ENCODE measurements at regions of chr1 and their contacts with region 1.

Region 1: DNA sequence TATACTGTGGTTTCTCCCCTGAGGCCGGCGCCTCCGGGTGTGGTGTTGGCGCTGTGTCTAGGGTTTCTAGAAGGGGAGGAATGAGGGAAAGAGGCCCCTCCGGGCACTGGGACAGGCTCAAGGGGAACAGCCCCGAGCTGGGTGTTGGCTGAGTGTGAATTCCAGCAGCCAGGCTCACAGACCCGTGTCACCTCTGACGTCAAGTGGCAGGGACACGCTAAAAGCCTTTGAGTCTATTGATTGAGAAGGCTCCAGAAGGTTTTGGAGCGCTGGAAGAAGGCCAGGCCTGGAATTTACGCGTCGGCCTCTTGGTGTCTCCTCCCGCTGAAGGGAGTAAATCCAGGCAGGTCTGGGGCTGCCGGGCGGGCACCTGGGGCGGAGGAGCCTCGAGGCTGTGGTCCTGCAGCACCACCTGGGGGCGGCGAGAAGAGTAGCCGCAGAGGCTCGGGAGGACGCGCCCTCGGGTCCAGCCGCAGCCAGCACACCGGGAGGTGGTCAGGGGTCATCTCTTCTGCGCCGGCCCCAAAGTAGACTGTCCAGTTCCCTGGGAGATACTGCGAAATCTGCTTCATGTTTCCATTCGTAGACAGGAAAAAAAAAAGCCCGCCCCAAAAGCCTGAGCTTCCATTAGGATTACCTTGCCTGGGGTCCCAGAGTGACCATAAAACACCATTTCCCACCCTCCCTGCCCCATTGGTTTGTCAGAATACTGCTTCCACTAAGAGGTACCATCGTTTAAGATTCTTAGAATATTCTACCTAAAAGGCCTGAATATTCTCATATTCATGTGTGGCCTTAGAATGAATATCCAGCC is 61.7 kb downstream of the TLR5 start:
- DNase-seq: peak; percentile 73
- H3K4me3 ChIP-seq: no peak overlapping the region
- H3K27ac ChIP-seq: no peak overlapping the region
- H3K4me1 ChIP-seq: no peaks in the 10 kb centered on the region
- CTCF ChIP-seq: peak; percentile 77

Region 2: GRCh38 chr1:222465211-222466041 is 616.0 kb before region 1 on chr1:
- CTCF ChIA-PET with region 1: no interaction called
- POLR2A ChIA-PET with region 1: no interaction called
- intact Hi-C with region 1: loop called (anchors 1 kb)
- DNase-seq: peak; percentile 81
- H3K4me3 ChIP-seq: peak overlapping the region; percentile 33
- H3K27ac ChIP-seq: no peak overlapping the region
- H3K4me1 ChIP-seq: peaks cover 5% of the 10 kb centered on the region
- CTCF ChIP-seq: peak; percentile 95

Region 3: GRCh38 chr1:222654849-222655248 is 426.5 kb before region 1 on chr1:
- CTCF ChIA-PET with region 1: no interaction called
- POLR2A ChIA-PET with region 1: no interaction called
- intact Hi-C with region 1: loop called (anchors 10 kb)
- DNase-seq: peak; percentile 8
- H3K4me3 ChIP-seq: no peak overlapping the region
- H3K27ac ChIP-seq: no peak overlapping the region
- H3K4me1 ChIP-seq: no peaks in the 10 kb centered on the region
- CTCF ChIP-seq: 0 out of 2 replicates have a peak, but pooled peaks have one; percentile 24

Region 4: DNA sequence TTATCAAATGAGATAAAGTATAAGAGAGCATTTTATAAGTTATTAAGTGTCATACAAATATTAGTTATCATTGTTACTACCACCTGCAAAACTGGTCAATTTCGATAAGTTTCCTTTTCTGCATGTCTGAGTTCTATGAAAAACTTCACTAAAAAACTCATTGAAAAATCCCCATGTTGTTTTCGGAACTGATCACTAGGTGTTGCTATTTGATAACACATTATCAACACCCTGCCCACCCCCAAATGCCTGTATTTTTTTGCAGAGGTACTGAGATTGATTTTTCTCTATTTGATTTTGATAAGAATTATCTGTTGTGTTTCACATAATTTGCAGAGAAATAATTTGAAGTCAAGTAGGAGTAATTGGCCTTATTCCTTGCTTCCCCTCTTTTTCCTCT is 288.6 kb before region 1 on chr1:
- CTCF ChIA-PET with region 1: no interaction called
- POLR2A ChIA-PET with region 1: no interaction called
- intact Hi-C with region 1: loop called (anchors 1 kb)
- DNase-seq: peak; percentile 20
- H3K4me3 ChIP-seq: no peak overlapping the region
- H3K27ac ChIP-seq: no peak overlapping the region
- H3K4me1 ChIP-seq: no peaks in the 10 kb centered on the region
- CTCF ChIP-seq: peak; percentile 79

Region 5: DNA sequence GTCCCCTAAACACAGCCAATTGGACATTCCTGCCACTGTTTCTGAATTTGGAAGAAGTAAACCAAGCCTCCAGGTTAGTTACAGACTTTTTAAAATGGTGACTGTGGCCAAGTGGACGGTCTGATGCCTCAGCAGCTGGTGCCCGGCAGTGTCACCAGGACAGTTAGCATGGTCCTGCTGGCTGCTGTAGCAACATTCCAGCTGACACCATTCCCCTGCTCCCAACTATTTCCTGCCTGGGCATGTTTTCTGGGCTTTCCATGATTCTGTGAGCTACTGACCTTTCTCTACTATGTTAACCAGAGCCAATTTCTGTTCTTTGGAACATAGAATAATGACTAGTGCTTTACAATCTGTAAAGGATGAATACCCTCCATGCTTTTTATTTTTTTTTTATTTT is 33.4 kb before region 1 on chr1:
- CTCF ChIA-PET with region 1: no interaction called
- POLR2A ChIA-PET with region 1: no interaction called
- intact Hi-C with region 1: no loop called
- DNase-seq: no peak
- H3K4me3 ChIP-seq: no peak overlapping the region
- H3K27ac ChIP-seq: no peak overlapping the region
- H3K4me1 ChIP-seq: no peaks in the 10 kb centered on the region
- CTCF ChIP-seq: no peak

Region 6: DNA sequence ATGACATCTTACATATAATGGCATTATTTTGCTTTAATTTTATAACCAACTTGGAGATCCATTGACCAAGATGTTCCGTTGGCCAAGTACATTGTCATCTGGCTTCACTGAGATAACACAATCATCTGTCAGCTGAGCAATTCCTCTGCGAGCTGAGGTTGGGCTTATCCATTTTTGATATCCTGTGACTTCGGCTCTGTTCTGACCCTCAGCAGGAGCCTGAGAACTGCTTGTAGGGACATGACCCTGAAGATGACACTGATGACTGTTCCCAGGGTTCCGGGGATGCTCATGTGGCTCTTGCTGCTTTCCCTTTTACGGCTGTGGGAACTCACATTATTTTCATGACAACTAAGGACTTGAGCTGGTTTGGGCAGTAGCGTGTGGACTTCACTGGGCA is 10.5 kb after region 1 on chr1:
- CTCF ChIA-PET with region 1: no interaction called
- POLR2A ChIA-PET with region 1: no interaction called
- intact Hi-C with region 1: no loop called
- DNase-seq: no peak
- H3K4me3 ChIP-seq: no peak overlapping the region
- H3K27ac ChIP-seq: no peak overlapping the region
- H3K4me1 ChIP-seq: no peaks in the 10 kb centered on the region
- CTCF ChIP-seq: no peak

Region 7: GRCh38 chr1:223556414-223557129 is 475.2 kb after region 1 on chr1:
- CTCF ChIA-PET with region 1: no interaction called
- POLR2A ChIA-PET with region 1: no interaction called
- intact Hi-C with region 1: no loop called
- DNase-seq: peak; percentile 18
- H3K4me3 ChIP-seq: no peak overlapping the region
- H3K27ac ChIP-seq: no peak overlapping the region
- H3K4me1 ChIP-seq: no peaks in the 10 kb centered on the region
- CTCF ChIP-seq: peak; percentile 75

Measured in OCI-LY7 (cell line).